ENCODE measurements at regions of chr1 and their contacts with region 1.

Region 1: GRCh38 chr1:116485071-116485735 is 85.6 kb downstream of the CD58 start:
- DNase-seq: peak; percentile 59 to 84 (median 76)
- ATAC-seq: peak; percentile 93
- H3K4me3 ChIP-seq: no peak overlapping the region
- H3K4me3 Mint-ChIP-seq: no peak overlapping the region
- H3K27ac ChIP-seq: no peak overlapping the region
- H3K27ac Mint-ChIP-seq: peak overlapping the region in 1 of 9 donors; percentile 21
- H3K4me1 ChIP-seq: no peaks in the 10 kb centered on the region
- H3K4me1 Mint-ChIP-seq: peaks cover 0 to 15% (median 0%) of the 10 kb centered on the region in 7 donors
- H3K27me3 ChIP-seq: no peaks in the 10 kb centered on the region
- H3K27me3 Mint-ChIP-seq: peaks cover 0 to 8% (median 0%) of the 10 kb centered on the region in 5 donors

Region 2: GRCh38 chr1:116151739-116152576 is 333.2 kb before region 1 on chr1:
- CTCF ChIA-PET with region 1: interaction called, 372 read pairs
- POLR2A ChIA-PET with region 1: no interaction called
- intact Hi-C with region 1: loop called (anchors 1 kb)
- DNase-seq: peak; percentile 61 to 89 (median 76)
- ATAC-seq: peak; percentile 97
- H3K4me3 ChIP-seq: peak overlapping the region; percentile 48
- H3K4me3 Mint-ChIP-seq: peak overlapping the region; percentile 70 to 87 (median 82)
- H3K27ac ChIP-seq: peak overlapping the region; percentile 74
- H3K27ac Mint-ChIP-seq: peak overlapping the region; percentile 63 to 98 (median 92)
- H3K4me1 ChIP-seq: peaks cover 7 to 21% of the 10 kb centered on the region in 2 donors
- H3K4me1 Mint-ChIP-seq: peaks cover 9 to 32% (median 25%) of the 10 kb centered on the region in 7 donors
- H3K27me3 ChIP-seq: no peaks in the 10 kb centered on the region
- H3K27me3 Mint-ChIP-seq: peaks cover 0 to 31% (median 0%) of the 10 kb centered on the region in 5 donors

Region 3: DNA sequence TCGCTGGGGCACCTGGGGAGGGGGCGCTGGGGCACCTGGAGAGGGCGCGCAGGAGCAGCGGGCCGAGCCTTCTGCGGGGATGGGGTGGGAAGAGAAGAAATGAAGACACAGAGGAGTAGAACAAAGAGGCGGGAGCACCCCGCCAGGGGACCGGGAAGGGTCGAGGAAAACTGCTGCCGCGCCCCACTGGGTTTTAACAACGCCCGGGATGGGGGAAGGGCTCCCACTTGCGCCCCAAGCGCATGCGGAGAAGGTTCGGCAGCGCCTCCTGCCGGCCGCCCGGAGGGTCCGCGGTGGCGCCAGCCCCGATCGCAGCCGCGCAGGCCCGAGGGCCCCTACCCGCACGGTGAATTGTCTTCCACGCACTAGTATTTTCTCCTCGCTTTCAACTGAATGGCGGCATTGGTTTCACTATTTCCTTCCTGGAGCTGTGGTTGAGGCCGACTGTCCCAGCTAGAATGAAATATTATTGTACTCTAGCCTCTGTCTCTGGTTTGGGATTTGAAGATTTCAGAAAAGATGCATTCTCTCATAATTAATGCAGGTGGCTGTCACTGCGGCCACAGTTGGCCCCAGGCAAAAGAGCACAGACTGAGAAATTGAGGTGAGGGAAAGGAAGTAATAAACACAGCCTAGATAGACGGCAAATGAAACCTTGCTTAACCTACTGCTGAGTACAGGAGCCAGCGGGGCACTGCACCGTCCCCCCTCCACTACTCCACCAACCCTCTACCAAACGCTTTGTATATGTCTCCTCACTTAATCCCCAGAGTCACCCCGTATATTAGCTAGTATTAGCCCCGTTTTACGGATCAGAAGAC is 316.7 kb before region 1 on chr1:
- CTCF ChIA-PET with region 1: interaction called, 4 read pairs
- POLR2A ChIA-PET with region 1: no interaction called
- intact Hi-C with region 1: loop called in 1 of 2 experiments (anchors 1 kb)
- DNase-seq: peak; percentile 74 to 88 (median 83)
- ATAC-seq: peak; percentile 97
- H3K4me3 ChIP-seq: peak overlapping the region; percentile 75
- H3K4me3 Mint-ChIP-seq: peak overlapping the region; percentile 70 to 90 (median 88)
- H3K27ac ChIP-seq: peak overlapping the region; percentile 60
- H3K27ac Mint-ChIP-seq: peak overlapping the region; percentile 81 to 96 (median 92)
- H3K4me1 ChIP-seq: peaks cover 9% of the 10 kb centered on the region in 2 donors
- H3K4me1 Mint-ChIP-seq: peaks cover 14 to 23% (median 19%) of the 10 kb centered on the region in 7 donors
- H3K27me3 ChIP-seq: no peaks in the 10 kb centered on the region
- H3K27me3 Mint-ChIP-seq: peaks cover 0 to 14% (median 0%) of the 10 kb centered on the region in 5 donors

Region 4: DNA sequence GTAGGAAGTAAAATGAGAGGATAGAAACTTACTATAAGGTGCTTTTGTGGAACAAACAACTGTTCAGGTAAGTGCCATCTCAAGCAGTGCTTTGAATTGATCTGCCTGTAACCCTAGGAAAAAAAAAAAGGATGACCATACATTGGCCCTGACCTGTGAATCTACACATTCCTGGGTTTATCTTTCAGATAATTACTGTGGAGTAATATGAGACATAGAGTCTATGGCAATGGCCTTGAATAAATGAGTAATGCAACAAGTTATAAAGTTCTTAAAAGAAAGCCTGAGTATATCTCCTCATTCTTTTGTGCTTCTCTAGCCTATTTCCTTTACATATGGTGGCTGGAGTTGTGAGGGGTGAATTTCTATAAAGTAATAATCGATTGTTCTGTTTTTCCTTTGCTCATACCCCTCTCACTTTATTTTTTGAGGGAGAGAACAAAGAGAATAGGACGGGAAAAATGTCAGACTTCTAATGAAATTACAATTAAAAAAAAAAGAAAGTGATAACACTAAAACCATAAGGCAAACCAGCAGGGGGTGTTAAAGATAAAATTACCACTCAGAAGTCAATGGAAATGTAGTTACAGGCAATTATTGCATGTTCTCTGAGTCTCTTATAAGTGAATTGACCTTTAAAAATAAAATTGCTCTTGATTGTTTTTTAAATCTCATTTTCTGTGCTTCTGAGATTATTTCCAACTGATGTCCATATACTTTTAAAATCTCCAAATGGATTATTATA is 124.6 kb before region 1 on chr1:
- CTCF ChIA-PET with region 1: interaction called, 3 read pairs
- POLR2A ChIA-PET with region 1: no interaction called
- intact Hi-C with region 1: loop called (anchors 1 kb)
- DNase-seq: peak in 3 of 9 donors; percentile 7 to 30 (median 15)
- ATAC-seq: no peak
- H3K4me3 ChIP-seq: no peak overlapping the region
- H3K4me3 Mint-ChIP-seq: no peak overlapping the region
- H3K27ac ChIP-seq: no peak overlapping the region
- H3K27ac Mint-ChIP-seq: peak overlapping the region in 1 of 9 donors; percentile 63
- H3K4me1 ChIP-seq: peaks cover 0 to 13% of the 10 kb centered on the region in 2 donors
- H3K4me1 Mint-ChIP-seq: peaks cover 4 to 55% (median 33%) of the 10 kb centered on the region in 7 donors
- H3K27me3 ChIP-seq: no peaks in the 10 kb centered on the region
- H3K27me3 Mint-ChIP-seq: peaks cover 0 to 24% (median 0%) of the 10 kb centered on the region in 5 donors

Region 5: GRCh38 chr1:116498789-116499628 is 13.8 kb after region 1 on chr1:
- CTCF ChIA-PET with region 1: interaction called, 57 read pairs
- POLR2A ChIA-PET with region 1: interaction called, 3 read pairs
- intact Hi-C with region 1: loop called in 1 of 2 experiments (anchors 2 kb)
- DNase-seq: peak in 8 of 9 donors; percentile 20 to 58 (median 44)
- ATAC-seq: peak; percentile 82
- H3K4me3 ChIP-seq: no peak overlapping the region
- H3K4me3 Mint-ChIP-seq: peak overlapping the region in 1 of 10 donors; percentile 13
- H3K27ac ChIP-seq: no peak overlapping the region
- H3K27ac Mint-ChIP-seq: peak overlapping the region in 3 of 9 donors; percentile 21 to 36 (median 28)
- H3K4me1 ChIP-seq: peaks cover 8 to 16% of the 10 kb centered on the region in 2 donors
- H3K4me1 Mint-ChIP-seq: peaks cover 20 to 66% (median 24%) of the 10 kb centered on the region in 7 donors
- H3K27me3 ChIP-seq: no peaks in the 10 kb centered on the region
- H3K27me3 Mint-ChIP-seq: no peaks in the 10 kb centered on the region